ENCODE measurements at regions of chr7 and their contacts with region 1.

Region 1: DNA sequence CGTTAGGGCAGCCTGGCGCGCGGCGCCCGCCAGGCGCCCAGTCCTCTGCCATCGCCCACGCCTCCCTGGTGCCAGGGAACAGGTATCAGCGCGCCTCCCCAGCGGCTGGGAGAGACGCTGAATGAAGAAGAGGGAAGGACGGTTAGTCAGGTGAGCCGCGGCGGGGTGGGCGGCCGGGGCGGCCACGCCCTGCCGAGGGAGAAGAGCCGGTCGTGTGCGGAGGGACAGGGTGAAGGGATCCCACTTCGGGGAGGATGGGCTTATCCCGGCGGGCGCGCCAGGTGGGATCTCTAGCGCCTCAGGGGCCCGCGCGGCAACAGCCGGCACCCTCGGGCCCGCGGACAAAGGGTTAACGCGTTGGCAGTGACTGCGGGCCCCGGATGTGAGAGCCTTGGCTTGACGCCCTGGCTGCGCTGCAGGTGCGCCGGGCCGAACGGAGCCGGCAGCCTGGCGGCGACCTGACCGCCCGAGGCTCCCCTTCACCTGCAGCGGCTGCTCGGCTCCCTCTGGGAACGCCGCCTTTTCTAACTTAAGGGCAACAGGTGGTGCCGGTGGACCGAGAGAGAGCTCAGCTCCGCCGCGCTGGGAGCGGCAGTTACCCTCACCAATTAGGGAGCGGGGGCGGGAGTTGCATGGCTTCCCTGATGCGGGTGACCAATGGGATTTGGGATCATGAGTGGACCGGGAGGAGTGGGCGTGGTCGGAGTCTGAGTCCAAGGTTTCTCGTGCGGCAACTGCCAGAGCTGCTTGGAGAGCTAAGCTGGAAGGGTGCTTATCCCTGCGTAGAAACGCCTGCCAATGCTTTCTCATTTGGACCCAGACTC is at the start of gene ARL4A:
- DNase-seq: peak; percentile 99
- ATAC-seq: peak; percentile 95 to 98
- total RNA-seq, gene ARL4A: 13.9 to 17.9 TPM

Region 2: DNA sequence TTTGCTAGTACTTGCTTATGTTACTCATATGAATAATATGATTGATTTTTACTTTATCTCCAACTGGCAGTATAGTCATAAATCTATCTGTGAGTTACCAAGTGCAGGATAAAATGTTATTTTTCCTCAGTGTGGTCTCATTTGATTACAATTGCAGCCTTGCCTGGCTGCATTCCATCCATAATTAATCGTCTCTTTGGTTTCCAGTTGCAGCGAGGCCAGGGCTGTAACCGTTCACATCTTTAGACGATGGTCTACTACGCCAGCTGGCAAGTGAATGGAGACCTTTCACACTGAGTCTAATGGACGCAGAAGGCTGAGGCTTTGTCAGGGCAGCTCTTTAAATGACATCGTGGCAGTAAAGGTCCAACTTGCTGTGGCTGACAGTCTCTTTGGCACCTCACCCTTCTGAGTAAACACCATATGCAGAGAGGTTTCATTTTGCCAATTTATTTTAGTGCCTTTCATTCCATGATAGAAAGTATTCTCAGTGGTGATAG is 84.3 kb after region 1 on chr7:
- intact Hi-C with region 1: loop called in 1 of 2 experiments (anchors 5 kb)
- DNase-seq: peak; percentile 35
- ATAC-seq: peak; percentile 89 to 90

Region 3: GRCh38 chr7:13017333-13017853 is 330.3 kb after region 1 on chr7:
- intact Hi-C with region 1: no loop called
- DNase-seq: no peak
- ATAC-seq: peak in 1 of 2 donors; percentile 38

Region 4: GRCh38 chr7:13032576-13032975 is 345.5 kb after region 1 on chr7:
- intact Hi-C with region 1: loop called in 1 of 2 experiments (anchors 10 kb)
- DNase-seq: no peak
- ATAC-seq: no peak

Region 5: DNA sequence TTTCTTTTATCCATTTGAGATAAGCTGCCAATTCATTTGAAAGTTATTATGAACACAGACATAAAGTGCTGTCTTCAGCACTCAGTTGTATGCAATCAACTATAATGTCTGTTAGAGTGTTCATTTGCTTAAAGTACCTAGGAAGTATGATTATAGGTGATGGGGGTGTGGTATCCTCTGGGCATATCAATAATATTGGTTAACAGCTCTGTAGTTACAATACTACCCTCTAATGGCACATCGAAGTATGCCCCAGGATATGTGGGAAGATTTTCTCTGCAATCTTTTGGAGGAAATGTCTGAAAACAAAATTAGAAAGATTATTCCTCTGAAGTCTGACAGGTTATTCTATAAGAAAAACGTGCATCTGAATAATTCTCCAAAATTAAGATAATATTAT is 430.0 kb after region 1 on chr7:
- intact Hi-C with region 1: loop called in 1 of 2 experiments (anchors 10 kb)
- DNase-seq: no peak
- ATAC-seq: no peak

Region 6: DNA sequence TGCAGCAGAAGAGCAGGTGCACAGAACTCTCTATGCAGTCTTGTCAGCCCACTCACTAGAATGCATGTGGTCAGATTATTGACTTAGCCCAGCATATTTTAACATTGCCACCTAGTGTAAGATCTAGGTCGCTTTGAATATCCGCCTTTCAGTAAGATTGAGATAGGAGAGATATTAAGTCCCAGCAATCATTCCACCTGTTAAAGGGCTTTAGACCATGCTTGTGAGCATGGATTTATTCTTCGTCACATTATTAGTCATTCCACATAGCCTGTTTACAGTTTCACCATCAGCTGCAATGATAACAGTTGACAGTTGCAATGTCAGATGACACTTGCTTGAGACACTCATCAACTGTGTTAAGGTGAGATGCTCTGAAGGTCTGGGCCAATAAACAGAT is 492.0 kb after region 1 on chr7:
- intact Hi-C with region 1: loop called in 1 of 2 experiments (anchors 5 kb)
- DNase-seq: no peak
- ATAC-seq: no peak

Region 7: DNA sequence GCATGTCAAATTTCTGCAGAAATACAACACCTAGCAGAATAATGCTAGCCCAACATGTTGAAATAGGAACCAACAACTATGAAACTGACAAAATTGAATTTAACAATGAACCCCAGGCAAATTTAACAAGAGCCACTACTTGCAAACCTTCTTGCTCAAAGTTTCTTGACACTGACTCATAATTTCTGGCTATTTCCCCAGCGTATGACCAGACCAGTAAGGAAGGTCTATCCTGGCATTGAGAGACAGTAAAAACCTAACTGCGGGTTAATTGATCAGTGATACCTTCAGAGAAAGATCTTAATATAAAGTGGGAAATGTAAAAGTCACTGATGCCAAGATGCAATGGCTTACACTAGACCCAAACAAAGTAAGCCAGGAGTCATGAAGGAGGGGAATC is 510.4 kb after region 1 on chr7:
- intact Hi-C with region 1: no loop called
- DNase-seq: no peak
- ATAC-seq: no peak

Region 8: DNA sequence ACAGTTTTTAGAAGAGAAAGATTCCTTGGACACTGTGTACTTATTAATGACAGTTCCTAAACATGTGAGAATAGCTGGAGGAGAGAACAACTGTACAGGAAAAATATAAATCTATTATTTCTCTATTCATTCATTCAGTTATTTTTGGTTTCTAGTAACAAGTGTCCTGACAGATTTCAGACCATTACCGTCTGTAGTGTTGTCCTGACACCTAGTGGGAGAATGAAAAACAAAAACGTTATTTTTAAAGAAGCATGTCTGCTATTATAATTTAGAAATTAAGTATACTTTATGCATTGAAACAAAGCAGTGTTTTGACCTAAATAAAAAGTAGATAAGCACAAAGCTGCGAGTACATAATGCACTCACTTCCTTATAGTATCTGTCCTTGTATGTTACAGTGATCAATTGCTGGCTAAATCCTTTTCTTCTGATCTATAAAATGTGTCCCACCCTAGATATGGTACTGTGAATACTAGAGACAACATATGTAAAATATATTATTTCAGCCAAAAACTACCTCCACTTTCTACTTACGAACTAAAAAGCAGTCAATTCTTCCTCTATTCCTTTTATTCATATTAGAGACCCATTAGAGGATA is 575.9 kb after region 1 on chr7:
- intact Hi-C with region 1: loop called (anchors 5 to 10 kb)
- DNase-seq: no peak
- ATAC-seq: peak; percentile 47

Measured in left cardiac atrium (tissue), 4 donors.